HepG2 (cell line): ENCODE measurements at regions of chr16 and their contacts with region 1.

Region 1: GRCh38 chr16:10314811-10315210 is 71.0 kb upstream of the ATF7IP2 start:
- DNase-seq: peak; percentile 65
- ATAC-seq: no peak
- H3K4me3 ChIP-seq: no peak overlapping the region
- H3K27ac ChIP-seq: no peak overlapping the region
- H3K4me1 ChIP-seq: peaks cover 73% of the 10 kb centered on the region
- H3K27me3 ChIP-seq: no peaks in the 10 kb centered on the region
- CTCF ChIP-seq: peak; percentile 80
- EP300 ChIP-seq: no peak
- POLR2A ChIP-seq: no peak
- RAD21 ChIP-seq: peak; percentile 74

Region 2: GRCh38 chr16:10150906-10151305 is 163.9 kb before region 1 on chr16:
- CTCF ChIA-PET with region 1: no interaction called
- POLR2A ChIA-PET with region 1: no interaction called
- in situ Hi-C with region 1: no loop called
- intact Hi-C with region 1: no loop called
- DNase-seq: no peak
- ATAC-seq: no peak
- H3K4me3 ChIP-seq: no peak overlapping the region
- H3K27ac ChIP-seq: no peak overlapping the region
- H3K4me1 ChIP-seq: no peaks in the 10 kb centered on the region
- H3K27me3 ChIP-seq: peaks cover 0 to 16% of the 10 kb centered on the region in 2 experiments; a peak in 2 of 5 replicates
- CTCF ChIP-seq: no peak
- EP300 ChIP-seq: no peak
- POLR2A ChIP-seq: no peak
- RAD21 ChIP-seq: no peak

Region 3: GRCh38 chr16:10641953-10642949 is 327.4 kb after region 1 on chr16:
- CTCF ChIA-PET with region 1: no interaction called
- POLR2A ChIA-PET with region 1: no interaction called
- in situ Hi-C with region 1: no loop called
- intact Hi-C with region 1: loop called (anchors 10 kb)
- DNase-seq: peak; percentile 60
- ATAC-seq: peak; percentile 78
- H3K4me3 ChIP-seq: peak overlapping the region in 2 of 3 experiments; percentile 1 to 49; a peak in 3 of 6 replicates
- H3K27ac ChIP-seq: peak overlapping the region; percentile 24
- H3K4me1 ChIP-seq: peaks cover 80% of the 10 kb centered on the region
- H3K27me3 ChIP-seq: no peaks in the 10 kb centered on the region; a peak in 1 of 5 replicates
- CTCF ChIP-seq: peak; percentile 14
- EP300 ChIP-seq: peak; percentile 28 to 80; a peak in 2 of 4 replicates
- POLR2A ChIP-seq: no peak
- RAD21 ChIP-seq: no peak